Adrenal gland (tissue), 19 donors: ENCODE measurements at regions of chr1 and their contacts with region 1.

Region 1: GRCh38 chr1:53393325-53393792 is 65.5 kb upstream of the LRP8 start:
- DNase-seq: peak; percentile 65 to 89 (median 76)
- H3K4me3 ChIP-seq: no peak overlapping the region
- H3K27ac ChIP-seq: no peak overlapping the region
- H3K4me1 ChIP-seq: no peaks in the 10 kb centered on the region
- H3K27me3 ChIP-seq: no peaks in the 10 kb centered on the region
- CTCF ChIP-seq: peak; percentile 83 to 94 (median 92)
- POLR2A ChIP-seq: no peak

Region 2: DNA sequence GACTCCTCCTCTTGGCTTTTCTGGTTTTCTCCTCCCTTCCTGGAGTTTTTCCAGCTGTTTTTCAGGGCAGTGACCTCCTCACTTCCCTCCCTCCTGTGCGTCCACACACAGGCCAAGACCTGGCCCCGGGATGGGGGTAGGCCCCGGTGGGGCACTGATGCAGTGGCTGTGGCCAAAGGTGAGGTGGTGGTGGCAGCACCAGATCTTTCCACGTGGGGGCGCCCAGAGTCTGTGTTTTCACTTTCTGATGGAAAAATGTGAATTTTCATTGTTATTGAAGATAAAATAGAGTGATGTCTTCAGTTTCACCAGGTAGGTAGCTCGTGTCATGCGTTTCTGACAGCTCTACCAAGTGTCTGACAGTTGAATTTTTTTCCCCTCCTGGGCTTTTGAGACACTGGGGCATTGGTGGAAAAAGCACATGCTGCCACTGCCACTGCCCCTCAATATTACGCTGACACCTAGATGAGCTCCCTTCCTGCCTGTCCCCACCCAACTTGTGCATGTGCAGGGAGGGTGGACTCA is 115.1 kb before region 1 on chr1:
- intact Hi-C with region 1: loop called (anchors 1 to 2 kb)
- DNase-seq: peak; percentile 36 to 80 (median 62)
- H3K4me3 ChIP-seq: no peak overlapping the region
- H3K27ac ChIP-seq: no peak overlapping the region
- H3K4me1 ChIP-seq: no peaks in the 10 kb centered on the region
- H3K27me3 ChIP-seq: no peaks in the 10 kb centered on the region
- CTCF ChIP-seq: peak; percentile 76 to 97 (median 90)
- POLR2A ChIP-seq: no peak

Region 3: DNA sequence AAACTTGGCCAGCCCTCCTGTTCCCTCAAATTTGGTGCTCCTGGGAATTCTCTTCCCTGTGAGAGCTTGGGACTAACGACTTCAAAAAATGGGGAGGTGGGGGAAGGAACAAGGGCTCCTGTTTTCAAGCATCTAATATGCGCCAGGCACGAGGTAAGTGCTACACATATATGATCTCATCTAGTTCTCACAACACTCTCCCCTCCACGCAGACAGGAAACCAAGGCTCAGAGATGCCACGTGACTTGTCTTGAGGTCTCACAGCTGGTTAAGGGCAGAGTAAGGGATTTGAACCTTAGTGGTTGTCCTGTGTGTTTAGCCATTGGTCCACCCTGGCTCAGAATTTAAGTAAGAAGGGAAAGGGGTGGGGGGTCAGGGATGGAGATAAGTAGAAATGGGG is 191.8 kb after region 1 on chr1:
- intact Hi-C with region 1: no loop called
- DNase-seq: peak in 4 of 7 donors; percentile 12 to 40 (median 16)
- H3K4me3 ChIP-seq: no peak overlapping the region
- H3K27ac ChIP-seq: no peak overlapping the region
- H3K4me1 ChIP-seq: no peaks in the 10 kb centered on the region
- H3K27me3 ChIP-seq: no peaks in the 10 kb centered on the region
- CTCF ChIP-seq: no peak
- POLR2A ChIP-seq: no peak